Mammary epithelial cell (primary cell): ENCODE measurements at regions of chr22 and their contacts with region 1.

Region 1: DNA sequence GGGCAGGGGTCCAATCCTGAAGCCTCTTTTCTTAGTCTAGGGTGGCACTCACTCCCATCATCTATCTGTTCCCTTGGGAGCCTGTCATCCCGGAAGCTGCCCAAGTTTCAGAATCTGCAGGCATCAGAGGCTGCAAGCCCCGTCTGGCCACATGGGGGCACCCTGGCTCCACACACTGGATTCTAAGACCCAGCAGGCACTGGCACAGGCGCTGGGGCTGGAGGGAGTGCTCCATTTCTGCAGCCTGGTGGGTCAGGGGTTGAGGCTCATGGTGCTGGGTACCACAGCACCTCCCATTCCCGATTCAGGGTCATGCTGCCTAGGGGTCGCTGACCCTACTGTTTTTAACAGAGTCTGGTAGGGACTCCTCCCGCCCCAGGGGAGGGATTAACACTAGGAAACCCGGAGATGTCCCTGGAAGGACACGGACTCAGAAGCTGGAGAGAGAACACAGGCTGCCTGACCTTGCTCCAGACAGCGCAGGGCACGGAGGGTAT is 243.9 kb upstream of the SYN3 start:
- DNase-seq: peak; percentile 48
- H3K4me3 ChIP-seq: no peak overlapping the region
- H3K27ac ChIP-seq: no peak overlapping the region
- H3K4me1 ChIP-seq: no peaks in the 10 kb centered on the region
- H3K27me3 ChIP-seq: no peaks in the 10 kb centered on the region
- CTCF ChIP-seq: peak; percentile 88 to 99

Region 2: DNA sequence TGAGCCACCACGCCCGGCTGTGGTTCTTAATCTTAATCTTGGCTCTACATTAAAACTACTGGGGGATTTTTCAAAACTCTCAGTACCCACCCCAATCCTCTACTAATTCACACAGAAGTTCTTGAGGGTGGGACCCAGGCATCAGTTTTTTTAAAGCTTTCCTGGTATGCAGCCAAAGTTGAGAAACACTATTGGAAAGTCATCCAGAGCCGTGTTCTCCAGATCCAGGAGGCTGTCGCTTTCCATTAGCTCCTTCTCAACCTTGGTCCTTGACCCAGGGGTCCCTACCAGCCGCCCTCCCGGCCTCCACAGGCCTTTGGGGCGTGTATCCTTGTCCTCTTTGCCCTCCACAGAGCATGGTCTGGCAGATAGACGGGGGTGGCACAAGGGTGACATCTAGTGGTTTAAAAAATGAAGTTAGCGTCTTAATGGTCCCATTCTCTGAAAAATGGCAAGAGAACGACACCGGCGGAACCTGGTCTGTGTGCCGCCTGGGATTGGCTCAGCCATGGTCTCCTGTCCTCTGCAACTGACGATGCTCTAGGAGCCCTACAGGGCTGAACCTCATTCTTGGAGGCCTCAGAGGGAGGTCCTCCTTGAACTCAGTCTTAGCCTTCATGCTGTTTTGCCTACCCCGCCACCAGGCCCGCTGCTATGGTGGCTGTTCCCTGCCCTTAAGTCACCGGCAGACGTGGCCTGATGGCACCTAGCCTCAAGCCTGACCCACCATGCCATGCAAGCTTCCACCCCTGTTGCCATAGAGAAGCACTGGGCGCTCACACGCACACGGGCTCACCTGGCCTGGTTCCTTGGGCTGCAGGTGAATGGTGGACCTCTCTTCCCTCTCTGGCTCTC is 91.9 kb before region 1 on chr22:
- CTCF ChIA-PET with region 1: no interaction called
- dilution Hi-C with region 1: no loop called
- in situ Hi-C with region 1: no loop called
- intact Hi-C with region 1: no loop called
- DNase-seq: peak; percentile 24
- H3K4me3 ChIP-seq: no peak overlapping the region
- H3K27ac ChIP-seq: no peak overlapping the region
- H3K4me1 ChIP-seq: no peaks in the 10 kb centered on the region
- H3K27me3 ChIP-seq: peaks cover 2% of the 10 kb centered on the region
- CTCF ChIP-seq: peak; percentile 63 to 75

Region 3: GRCh38 chr22:33467620-33468095 is 165.6 kb after region 1 on chr22:
- CTCF ChIA-PET with region 1: interaction called, 7 read pairs
- dilution Hi-C with region 1: no loop called
- in situ Hi-C with region 1: loop called in 1 of 2 experiments (anchors 25 kb)
- intact Hi-C with region 1: loop called (anchors 1 kb)
- DNase-seq: no peak
- H3K4me3 ChIP-seq: no peak overlapping the region
- H3K27ac ChIP-seq: no peak overlapping the region
- H3K4me1 ChIP-seq: no peaks in the 10 kb centered on the region
- H3K27me3 ChIP-seq: no peaks in the 10 kb centered on the region
- CTCF ChIP-seq: peak in 1 of 2 donors; percentile 18

Region 4: GRCh38 chr22:33472462-33473344 is 170.6 kb after region 1 on chr22:
- CTCF ChIA-PET with region 1: interaction called, 7 read pairs
- dilution Hi-C with region 1: no loop called
- in situ Hi-C with region 1: loop called in 1 of 2 experiments (anchors 25 kb)
- intact Hi-C with region 1: loop called (anchors 1 kb)
- DNase-seq: no peak
- H3K4me3 ChIP-seq: no peak overlapping the region
- H3K27ac ChIP-seq: no peak overlapping the region
- H3K4me1 ChIP-seq: no peaks in the 10 kb centered on the region
- H3K27me3 ChIP-seq: no peaks in the 10 kb centered on the region
- CTCF ChIP-seq: no peak

Region 5: GRCh38 chr22:33519071-33519973 is 217.2 kb after region 1 on chr22:
- CTCF ChIA-PET with region 1: interaction called, 3 read pairs
- dilution Hi-C with region 1: no loop called
- in situ Hi-C with region 1: no loop called
- intact Hi-C with region 1: loop called (anchors 2 kb)
- DNase-seq: peak; percentile 18
- H3K4me3 ChIP-seq: no peak overlapping the region
- H3K27ac ChIP-seq: no peak overlapping the region
- H3K4me1 ChIP-seq: no peaks in the 10 kb centered on the region
- H3K27me3 ChIP-seq: no peaks in the 10 kb centered on the region
- CTCF ChIP-seq: peak; percentile 21 to 36

Region 6: DNA sequence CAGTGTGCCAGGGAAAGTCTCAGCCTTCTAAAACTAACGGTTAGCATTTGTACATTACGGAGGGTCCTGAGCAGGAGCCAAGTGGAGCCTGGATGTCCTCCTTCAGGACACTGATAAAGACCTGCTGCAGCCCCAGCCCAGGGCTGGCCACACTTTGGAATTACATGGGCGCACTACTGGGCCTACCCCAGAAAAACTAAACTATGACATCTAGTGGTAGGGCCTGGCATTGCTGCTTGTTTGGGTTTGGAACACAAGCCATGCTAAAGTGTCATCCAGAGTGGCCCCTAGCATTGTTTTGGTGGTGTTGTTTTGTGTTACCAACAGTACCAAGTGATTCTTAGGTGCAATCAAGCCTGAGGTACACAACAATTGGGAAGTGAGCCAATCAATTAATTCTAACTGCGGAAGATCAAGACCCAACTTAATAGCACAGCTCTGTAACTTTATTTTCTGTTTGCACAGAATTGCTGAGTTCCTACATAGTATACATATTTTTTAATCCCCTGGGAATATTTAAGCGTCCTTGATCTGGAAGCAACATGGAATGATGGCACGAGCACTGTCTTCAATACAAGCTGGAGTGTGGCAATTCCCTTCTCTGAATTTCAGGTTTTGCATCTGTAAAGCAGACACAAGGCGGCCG is 277.5 kb after region 1 on chr22:
- CTCF ChIA-PET with region 1: interaction called, 3 read pairs
- dilution Hi-C with region 1: no loop called
- in situ Hi-C with region 1: loop called (anchors 5 to 10 kb)
- intact Hi-C with region 1: loop called (anchors 1 kb)
- DNase-seq: peak; percentile 28
- H3K4me3 ChIP-seq: no peak overlapping the region
- H3K27ac ChIP-seq: no peak overlapping the region
- H3K4me1 ChIP-seq: no peaks in the 10 kb centered on the region
- H3K27me3 ChIP-seq: no peaks in the 10 kb centered on the region
- CTCF ChIP-seq: peak; percentile 91 to 95

Region 7: DNA sequence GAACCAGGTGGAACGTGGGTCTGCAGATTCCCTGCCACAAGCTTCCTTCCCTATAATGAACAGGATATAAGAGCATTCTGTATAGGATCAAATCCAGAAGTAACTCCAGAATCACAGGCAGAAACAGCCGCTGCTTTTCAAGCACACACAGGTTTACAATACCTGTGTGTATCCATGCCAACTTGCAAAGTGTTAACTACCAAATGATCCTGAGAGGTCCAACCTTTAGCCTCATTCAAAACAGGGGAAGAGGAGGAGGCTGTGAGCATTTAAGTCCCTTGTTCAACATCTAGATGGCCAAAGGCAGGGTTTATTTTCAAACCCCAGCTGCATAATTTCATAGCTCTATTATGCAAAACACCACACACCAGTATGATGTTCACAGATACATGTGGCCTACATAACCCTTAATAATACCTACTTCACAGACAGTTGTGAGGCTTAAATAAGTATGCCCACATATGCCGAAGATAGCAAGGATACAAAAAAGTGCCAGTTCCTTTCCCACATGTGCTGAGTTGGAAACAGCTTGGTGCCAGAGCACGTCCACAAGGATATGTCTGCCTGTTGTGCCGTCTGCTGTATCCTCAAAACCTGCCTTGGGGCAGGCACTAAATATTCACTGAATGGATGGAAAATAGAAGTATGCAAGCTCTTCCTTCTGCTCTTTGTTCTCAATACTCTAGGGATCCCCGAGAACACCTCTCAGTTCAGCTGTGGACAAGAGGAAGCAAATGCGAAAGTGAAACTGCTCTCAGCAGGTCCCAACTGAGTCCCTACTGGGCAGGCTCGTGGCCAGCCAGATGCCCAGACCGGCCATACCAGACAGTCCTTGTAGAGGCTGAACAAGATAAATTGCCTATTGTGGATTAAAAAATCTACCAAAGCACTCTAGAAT is 551.4 kb after region 1 on chr22:
- CTCF ChIA-PET with region 1: no interaction called
- dilution Hi-C with region 1: no loop called
- in situ Hi-C with region 1: loop called in 1 of 2 experiments (anchors 25 kb)
- intact Hi-C with region 1: no loop called
- DNase-seq: peak; percentile 71
- H3K4me3 ChIP-seq: peak overlapping the region; percentile 47 to 52 (median 51)
- H3K27ac ChIP-seq: peak overlapping the region; percentile 57
- H3K4me1 ChIP-seq: peaks cover 4% of the 10 kb centered on the region
- H3K27me3 ChIP-seq: no peaks in the 10 kb centered on the region
- CTCF ChIP-seq: no peak

Region 8: DNA sequence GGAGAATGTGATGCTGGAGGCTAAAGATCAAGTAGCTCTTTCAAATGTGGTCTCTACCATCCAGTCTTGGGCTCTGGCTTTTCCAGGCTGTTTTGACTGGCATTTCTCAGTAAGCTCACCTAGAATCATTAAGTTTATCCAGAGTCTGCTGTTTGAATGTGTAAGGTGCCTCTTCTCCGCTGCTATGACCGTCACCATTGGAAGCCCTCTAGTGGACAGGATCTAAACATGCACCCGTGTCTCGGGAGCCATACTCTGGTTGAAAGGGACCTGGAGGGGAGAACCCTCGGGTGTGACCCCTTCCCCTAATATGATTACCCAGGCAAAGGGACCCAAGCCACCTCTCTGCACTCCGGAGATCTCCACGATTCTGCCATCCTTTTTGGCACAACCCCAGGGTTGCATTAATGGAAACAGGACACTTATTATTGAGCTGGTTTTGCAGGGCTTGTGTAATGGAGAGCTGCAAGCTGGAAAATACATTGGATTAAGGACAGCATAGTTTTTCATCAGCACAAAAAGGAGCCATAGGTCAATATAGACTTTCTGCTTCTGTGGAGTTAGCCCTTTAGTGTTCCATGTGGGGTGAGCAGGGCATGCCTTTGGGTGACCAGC is 809.2 kb after region 1 on chr22:
- CTCF ChIA-PET with region 1: no interaction called
- dilution Hi-C with region 1: no loop called
- in situ Hi-C with region 1: no loop called
- intact Hi-C with region 1: loop called (anchors 1 kb)
- DNase-seq: peak; percentile 17
- H3K4me3 ChIP-seq: no peak overlapping the region
- H3K27ac ChIP-seq: no peak overlapping the region
- H3K4me1 ChIP-seq: no peaks in the 10 kb centered on the region
- H3K27me3 ChIP-seq: no peaks in the 10 kb centered on the region
- CTCF ChIP-seq: peak; percentile 46 to 72